ENCODE measurements at regions of chr3 and their contacts with region 1.

Region 1: DNA sequence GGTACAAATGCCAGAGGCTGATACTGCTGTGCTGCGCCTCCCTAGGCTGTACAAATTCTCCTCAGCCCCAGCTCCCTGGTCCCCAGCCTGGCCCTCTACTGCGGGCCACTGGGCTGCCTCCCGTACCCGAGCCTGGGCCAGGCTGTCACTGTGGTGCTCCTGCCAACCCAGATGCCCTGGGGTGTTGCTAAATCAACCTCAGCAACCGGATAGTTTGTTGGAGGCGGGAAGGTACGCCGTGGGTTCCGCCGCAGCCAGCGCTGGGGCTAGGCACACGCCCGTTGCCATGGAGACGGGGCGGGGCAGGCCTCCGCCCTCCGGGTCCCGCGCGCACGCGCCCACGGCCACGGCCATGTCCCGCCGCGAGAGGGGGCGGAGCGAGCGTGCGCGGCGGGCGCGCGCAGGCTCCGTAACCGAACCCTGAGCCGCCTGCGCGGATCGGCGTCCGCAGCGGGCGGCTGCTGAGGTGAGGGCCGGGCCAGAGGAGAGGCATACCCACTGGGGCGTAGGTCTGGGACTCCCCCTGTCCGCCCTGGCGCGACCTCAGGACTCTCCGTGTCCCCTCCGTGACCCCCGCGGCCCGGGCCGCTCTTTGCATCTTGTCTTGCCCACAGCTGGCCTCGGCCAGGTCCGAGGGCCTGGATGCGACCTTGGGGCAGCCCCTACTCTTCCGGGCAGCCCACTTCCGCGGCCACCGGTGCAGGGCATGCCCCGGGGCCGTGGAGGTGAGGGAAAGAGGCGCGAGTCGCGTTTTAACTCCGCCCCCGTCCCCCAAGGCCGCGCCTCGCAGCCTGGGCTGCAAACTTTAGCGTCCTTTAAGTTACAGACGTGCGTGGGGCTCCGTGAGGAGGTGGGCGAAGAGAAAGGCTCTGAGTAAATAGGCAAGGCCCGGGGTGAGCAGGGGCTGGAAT is at the start of gene TEX264:
- DNase-seq: peak; percentile 37
- ATAC-seq: peak; percentile 76
- H3K4me3 ChIP-seq: peak within 1 kb of the TSS; percentile 85 to 92
- H3K27ac ChIP-seq: peak within 1 kb of the TSS; percentile 99
- H3K4me1 ChIP-seq: peaks cover 17 to 51% of the 10 kb centered on the region in 2 experiments
- H3K27me3 ChIP-seq: no peaks in the 10 kb centered on the region
- CTCF ChIP-seq: no peak
- POLR2A ChIP-seq: peak; percentile 92
- RAD21 ChIP-seq: no peak
- total RNA-seq, gene TEX264: 36.0 TPM

Region 2: DNA sequence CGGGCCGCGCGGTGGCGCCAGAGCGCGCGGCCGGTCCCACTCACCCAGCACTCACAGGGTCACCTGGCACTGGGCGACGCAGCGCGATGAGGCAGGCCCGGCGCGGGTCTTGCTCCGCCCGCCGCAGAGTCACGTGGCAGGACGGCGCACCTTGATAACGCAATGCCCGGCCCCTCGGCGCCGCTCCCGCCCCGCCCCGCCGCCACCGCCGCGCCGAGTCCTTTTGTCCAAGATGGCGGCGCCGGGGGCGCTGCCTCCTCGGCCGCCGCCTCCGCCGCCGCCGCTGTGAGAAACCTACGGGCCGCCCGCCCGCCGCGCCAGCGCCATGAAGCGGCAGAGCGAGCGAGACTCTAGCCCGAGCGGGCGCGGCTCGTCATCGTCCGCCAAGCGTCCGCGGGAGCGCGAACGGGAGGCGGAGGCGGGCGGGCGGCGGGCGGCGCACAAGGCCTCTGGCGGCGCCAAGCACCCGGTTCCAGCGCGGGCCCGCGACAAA is 280.0 kb before region 1 on chr3 and contains the start of gene RBM15B:
- CTCF ChIA-PET with region 1: no interaction called
- POLR2A ChIA-PET with region 1: no interaction called
- RAD21 ChIA-PET with region 1: no interaction called
- intact Hi-C with region 1: loop called (anchors 5 kb)
- DNase-seq: peak; percentile 92
- ATAC-seq: peak; percentile 91
- H3K4me3 ChIP-seq: peak within 1 kb of the TSS; percentile 57 to 59
- H3K27ac ChIP-seq: peak within 1 kb of the TSS; percentile 77
- H3K4me1 ChIP-seq: peaks cover 21 to 44% of the 10 kb centered on the region in 2 experiments; a peak in 3 of 4 replicates
- H3K27me3 ChIP-seq: no peaks in the 10 kb centered on the region
- CTCF ChIP-seq: peak in 1 of 3 experiments; percentile 84; a peak in 2 of 6 replicates
- POLR2A ChIP-seq: no peak
- RAD21 ChIP-seq: no peak
- total RNA-seq, gene RBM15B: 24.1 TPM

Region 3: DNA sequence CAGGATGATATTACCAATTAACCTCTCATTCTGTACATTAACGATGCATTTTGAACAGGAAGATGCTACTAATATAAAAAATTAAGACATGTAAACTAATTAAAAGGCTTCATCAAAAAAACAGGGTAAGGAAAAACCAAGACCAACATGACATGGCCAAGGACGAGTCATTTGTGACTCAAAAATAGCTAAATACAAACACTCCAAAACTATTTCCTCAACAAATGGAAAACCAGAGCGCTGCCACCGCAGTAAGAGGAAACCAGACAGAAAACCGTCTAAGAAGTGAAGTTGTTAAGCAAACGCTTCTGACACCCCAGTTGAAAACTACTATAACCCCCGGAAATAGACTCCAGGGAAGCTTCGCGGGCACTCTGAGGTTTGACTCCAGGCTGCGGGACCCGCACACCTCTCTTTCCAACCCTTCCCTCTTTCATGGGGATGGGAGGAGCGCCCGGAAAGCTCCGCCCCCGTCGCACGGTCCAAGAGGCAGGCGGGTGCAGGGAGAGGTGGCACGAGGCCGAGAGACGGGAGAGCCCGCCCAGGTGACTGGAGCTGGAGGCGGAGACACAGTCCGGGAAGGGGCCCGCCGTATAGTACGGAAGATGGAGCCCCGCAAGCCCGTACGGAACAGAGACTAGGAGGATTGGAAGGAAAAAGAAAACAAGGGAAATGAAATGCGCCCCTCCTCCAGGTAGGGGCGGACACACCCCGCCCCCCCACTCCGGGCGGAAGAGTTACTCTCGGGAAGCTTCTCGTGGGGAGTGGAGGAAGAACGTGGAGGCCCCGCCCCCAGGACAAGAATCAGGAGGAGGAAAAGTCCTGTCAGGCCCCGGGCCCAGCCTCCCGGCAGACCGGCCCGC is 172.0 kb before region 1 on chr3:
- CTCF ChIA-PET with region 1: interaction called, 80 read pairs
- POLR2A ChIA-PET with region 1: interaction called, 12 read pairs
- RAD21 ChIA-PET with region 1: interaction called, 12 to 17 read pairs
- intact Hi-C with region 1: loop called (anchors 1 kb)
- DNase-seq: peak; percentile 84
- ATAC-seq: peak; percentile 81
- H3K4me3 ChIP-seq: peak overlapping the region; percentile 62 to 72
- H3K27ac ChIP-seq: peak overlapping the region; percentile 89
- H3K4me1 ChIP-seq: peaks cover 10 to 17% of the 10 kb centered on the region in 2 experiments; a peak in 3 of 4 replicates
- H3K27me3 ChIP-seq: no peaks in the 10 kb centered on the region
- CTCF ChIP-seq: no peak
- POLR2A ChIP-seq: peak; percentile 9
- RAD21 ChIP-seq: no peak

Region 4: GRCh38 chr3:51637941-51638471 is 33.1 kb before region 1 on chr3:
- CTCF ChIA-PET with region 1: interaction called, 14 read pairs
- POLR2A ChIA-PET with region 1: no interaction called
- RAD21 ChIA-PET with region 1: interaction called in 1 of 2 experiments, 3 read pairs
- intact Hi-C with region 1: loop called (anchors 2 kb)
- DNase-seq: peak; percentile 73
- ATAC-seq: peak; percentile 97
- H3K4me3 ChIP-seq: no peak overlapping the region
- H3K27ac ChIP-seq: no peak overlapping the region
- H3K4me1 ChIP-seq: no peaks in the 10 kb centered on the region; a peak in 1 of 4 replicates
- H3K27me3 ChIP-seq: no peaks in the 10 kb centered on the region
- CTCF ChIP-seq: peak; percentile 94 to 99 (median 95)
- POLR2A ChIP-seq: no peak
- RAD21 ChIP-seq: peak; percentile 82

Region 5: GRCh38 chr3:51682079-51682478 is 11.0 kb after region 1 on chr3:
- CTCF ChIA-PET with region 1: interaction called, 26 read pairs
- POLR2A ChIA-PET with region 1: interaction called, 4 read pairs
- RAD21 ChIA-PET with region 1: interaction called, 3 to 7 read pairs
- intact Hi-C with region 1: no loop called
- DNase-seq: peak; percentile 72
- ATAC-seq: peak; percentile 97
- H3K4me3 ChIP-seq: no peak overlapping the region
- H3K27ac ChIP-seq: no peak overlapping the region
- H3K4me1 ChIP-seq: peaks cover 6 to 11% of the 10 kb centered on the region in 2 experiments
- H3K27me3 ChIP-seq: no peaks in the 10 kb centered on the region
- CTCF ChIP-seq: peak; percentile 84 to 87 (median 85)
- POLR2A ChIP-seq: no peak
- RAD21 ChIP-seq: peak; percentile 91